Ovary (tissue), 10 donors: ENCODE measurements at regions of chr1 and their contacts with region 1.

Region 1: GRCh38 chr1:43545695-43546387 is 15.2 kb downstream of the PTPRF start:
- DNase-seq: peak; percentile 47 to 63 (median 60)
- H3K4me3 ChIP-seq: no peak overlapping the region
- H3K27ac ChIP-seq: no peak overlapping the region
- H3K4me1 ChIP-seq: peaks cover 21% of the 10 kb centered on the region
- H3K27me3 ChIP-seq: no peaks in the 10 kb centered on the region
- CTCF ChIP-seq: no peak
- EP300 ChIP-seq: no peak
- POLR2A ChIP-seq: no peak

Region 2: GRCh38 chr1:43600033-43601020 is 54.5 kb after region 1 on chr1:
- intact Hi-C with region 1: loop called in 1 of 4 experiments (anchors 2 kb)
- DNase-seq: no peak
- H3K4me3 ChIP-seq: no peak overlapping the region
- H3K27ac ChIP-seq: no peak overlapping the region
- H3K4me1 ChIP-seq: no peaks in the 10 kb centered on the region
- H3K27me3 ChIP-seq: no peaks in the 10 kb centered on the region
- CTCF ChIP-seq: no peak
- EP300 ChIP-seq: no peak
- POLR2A ChIP-seq: no peak